T-cell (primary cell): ENCODE measurements at regions of chr4 and their contacts with region 1.

Region 1: DNA sequence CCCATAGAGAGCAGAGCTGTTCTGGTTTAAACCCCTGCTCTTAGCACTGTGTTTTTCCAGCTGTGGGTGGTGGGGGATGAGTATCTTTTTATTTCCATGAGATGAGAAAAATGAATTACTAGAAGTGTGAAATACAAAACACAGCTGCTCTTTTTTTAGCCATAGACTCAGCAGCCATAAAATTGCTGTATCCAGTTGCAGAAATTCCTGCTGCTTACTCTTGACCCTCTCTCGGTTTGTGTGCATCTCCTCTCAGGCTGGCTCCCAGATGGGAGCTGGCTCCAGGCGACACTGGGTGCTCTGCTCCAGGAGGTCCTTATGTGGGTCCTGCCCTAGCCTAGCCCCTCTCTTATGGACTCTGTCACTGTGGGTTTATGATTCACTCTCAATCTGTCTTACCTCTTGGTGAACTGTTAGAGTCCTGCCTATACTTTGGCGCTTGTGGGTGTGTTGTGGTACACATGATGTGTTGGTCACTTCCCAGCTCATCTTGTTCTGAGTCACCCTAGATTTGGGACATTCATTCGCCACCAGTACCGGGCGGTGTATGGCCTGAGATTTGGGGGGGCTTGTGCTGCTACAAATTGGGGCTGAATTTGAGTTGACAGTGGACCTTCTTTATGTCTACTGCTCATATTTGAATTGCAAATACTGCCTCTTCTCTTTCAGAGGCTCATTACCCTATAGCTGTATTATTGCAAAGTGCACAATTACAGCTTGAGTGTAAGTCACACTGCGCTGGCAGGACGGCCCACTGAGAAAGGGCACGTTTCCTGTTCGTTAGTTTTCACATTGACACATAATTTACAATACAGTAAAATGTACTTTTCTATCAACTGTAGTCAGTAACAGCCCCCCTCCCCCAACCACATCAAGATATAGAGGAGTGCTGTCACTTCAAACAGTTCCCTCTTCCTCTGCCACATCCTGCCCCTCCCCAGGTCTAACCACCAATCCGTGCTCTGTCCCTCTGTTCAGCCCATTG is 46.9 kb upstream of the MSANTD1 start:
- DNase-seq: peak; percentile 49 to 90 (median 79)
- ATAC-seq: peak; percentile 98
- H3K4me3 ChIP-seq: peak overlapping the region; percentile 11 to 21
- H3K4me3 Mint-ChIP-seq: peak overlapping the region; percentile 59 to 73 (median 65)
- H3K27ac ChIP-seq: peak overlapping the region; percentile 64
- H3K27ac Mint-ChIP-seq: peak overlapping the region; percentile 82 to 87
- H3K4me1 ChIP-seq: peaks cover 40 to 66% of the 10 kb centered on the region in 2 experiments
- H3K4me1 Mint-ChIP-seq: peaks cover 54 to 59% (median 58%) of the 10 kb centered on the region in 3 donors
- H3K27me3 ChIP-seq: no peaks in the 10 kb centered on the region
- H3K27me3 Mint-ChIP-seq: no peaks in the 10 kb centered on the region

Region 2: DNA sequence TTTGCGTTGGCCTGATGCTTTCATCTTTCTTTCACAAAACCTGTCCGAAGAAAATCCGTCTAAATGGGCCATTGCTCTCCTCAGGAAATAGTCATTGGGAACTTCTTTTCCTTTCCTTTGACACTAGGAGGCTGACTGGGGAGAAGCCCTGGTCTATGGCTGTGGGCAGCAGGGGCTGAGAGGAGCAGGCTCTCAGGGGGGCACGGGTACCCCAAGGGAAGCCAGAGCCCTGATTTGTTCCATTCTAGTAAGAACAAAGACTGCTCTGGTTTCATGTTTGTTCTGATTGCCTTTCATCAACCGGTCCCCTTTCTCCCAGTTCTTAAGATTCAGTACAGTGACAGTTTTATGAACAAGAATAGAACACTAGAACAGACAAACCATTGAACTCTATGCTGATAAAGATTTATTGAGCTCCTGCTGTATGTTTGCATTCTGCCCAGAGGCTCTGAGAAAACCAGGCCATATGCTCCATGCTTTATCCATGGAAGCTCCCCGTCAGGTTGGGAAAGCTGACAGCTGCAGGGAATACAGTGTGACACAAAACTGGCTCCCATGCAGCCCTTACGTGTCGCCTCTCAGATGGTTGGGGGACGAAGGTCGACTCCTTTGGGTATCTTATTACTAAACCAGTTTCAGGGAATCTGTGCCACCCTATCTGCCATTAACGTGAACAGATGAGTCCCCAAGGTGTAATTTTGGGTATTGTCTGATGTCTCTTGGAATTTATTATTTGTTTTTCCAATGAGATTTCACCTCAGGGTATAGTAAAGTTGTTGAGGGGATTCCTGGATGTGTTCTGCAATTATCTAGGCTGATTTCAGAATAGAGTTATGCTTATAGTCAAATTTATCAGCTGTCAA is 25.4 kb before region 1 on chr4:
- CTCF ChIA-PET with region 1: no interaction called
- POLR2A ChIA-PET with region 1: no interaction called
- DNase-seq: no peak
- ATAC-seq: no peak
- H3K4me3 ChIP-seq: no peak overlapping the region
- H3K4me3 Mint-ChIP-seq: no peak overlapping the region
- H3K27ac ChIP-seq: no peak overlapping the region
- H3K27ac Mint-ChIP-seq: no peak overlapping the region
- H3K4me1 ChIP-seq: no peaks in the 10 kb centered on the region
- H3K4me1 Mint-ChIP-seq: no peaks in the 10 kb centered on the region
- H3K27me3 ChIP-seq: no peaks in the 10 kb centered on the region
- H3K27me3 Mint-ChIP-seq: no peaks in the 10 kb centered on the region

Region 3: DNA sequence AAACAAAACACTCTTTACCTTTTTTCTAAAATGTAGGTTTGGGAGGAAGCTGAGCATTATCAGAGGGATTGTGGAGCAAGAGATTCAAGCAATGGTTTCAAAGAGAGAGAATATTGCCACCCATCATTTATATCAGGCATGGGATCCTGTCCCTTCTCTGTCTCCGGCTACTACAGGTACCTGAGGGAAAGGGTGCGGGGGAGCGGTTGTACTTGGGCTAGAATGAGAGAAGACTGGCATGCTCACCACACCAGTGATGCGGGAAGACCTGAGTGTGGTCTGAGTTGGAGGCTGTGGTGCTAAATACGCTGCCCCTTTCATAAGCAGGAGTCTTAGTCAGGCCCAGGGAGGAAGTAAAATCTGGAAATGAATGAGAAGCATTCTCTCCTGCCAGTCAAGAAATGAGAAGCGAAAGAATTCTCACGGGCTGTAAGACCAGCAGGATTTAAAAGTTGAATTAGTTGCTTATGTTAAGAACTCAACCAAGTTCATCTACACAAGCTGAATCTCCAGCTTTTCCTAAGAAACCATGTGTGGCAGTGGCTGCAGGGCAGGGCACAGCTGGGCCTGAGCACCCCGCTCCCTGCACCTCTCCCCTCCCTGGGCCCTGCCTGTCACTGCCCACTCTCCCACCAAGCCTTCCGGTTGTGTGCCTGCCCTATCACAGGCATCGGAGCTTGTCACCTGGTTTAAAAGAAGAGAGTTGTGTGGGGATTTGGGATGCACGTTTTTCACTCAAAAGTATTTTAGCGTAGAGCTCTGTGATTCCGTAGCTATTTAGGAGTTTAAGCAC is 22.1 kb after region 1 on chr4:
- CTCF ChIA-PET with region 1: interaction called, 3 to 11 read pairs
- POLR2A ChIA-PET with region 1: interaction called in 1 of 2 experiments, 3 read pairs
- DNase-seq: no peak
- ATAC-seq: no peak
- H3K4me3 ChIP-seq: no peak overlapping the region
- H3K4me3 Mint-ChIP-seq: no peak overlapping the region
- H3K27ac ChIP-seq: no peak overlapping the region
- H3K27ac Mint-ChIP-seq: no peak overlapping the region
- H3K4me1 ChIP-seq: peaks cover 0 to 12% of the 10 kb centered on the region in 2 experiments
- H3K4me1 Mint-ChIP-seq: no peaks in the 10 kb centered on the region
- H3K27me3 ChIP-seq: no peaks in the 10 kb centered on the region
- H3K27me3 Mint-ChIP-seq: no peaks in the 10 kb centered on the region

Region 4: DNA sequence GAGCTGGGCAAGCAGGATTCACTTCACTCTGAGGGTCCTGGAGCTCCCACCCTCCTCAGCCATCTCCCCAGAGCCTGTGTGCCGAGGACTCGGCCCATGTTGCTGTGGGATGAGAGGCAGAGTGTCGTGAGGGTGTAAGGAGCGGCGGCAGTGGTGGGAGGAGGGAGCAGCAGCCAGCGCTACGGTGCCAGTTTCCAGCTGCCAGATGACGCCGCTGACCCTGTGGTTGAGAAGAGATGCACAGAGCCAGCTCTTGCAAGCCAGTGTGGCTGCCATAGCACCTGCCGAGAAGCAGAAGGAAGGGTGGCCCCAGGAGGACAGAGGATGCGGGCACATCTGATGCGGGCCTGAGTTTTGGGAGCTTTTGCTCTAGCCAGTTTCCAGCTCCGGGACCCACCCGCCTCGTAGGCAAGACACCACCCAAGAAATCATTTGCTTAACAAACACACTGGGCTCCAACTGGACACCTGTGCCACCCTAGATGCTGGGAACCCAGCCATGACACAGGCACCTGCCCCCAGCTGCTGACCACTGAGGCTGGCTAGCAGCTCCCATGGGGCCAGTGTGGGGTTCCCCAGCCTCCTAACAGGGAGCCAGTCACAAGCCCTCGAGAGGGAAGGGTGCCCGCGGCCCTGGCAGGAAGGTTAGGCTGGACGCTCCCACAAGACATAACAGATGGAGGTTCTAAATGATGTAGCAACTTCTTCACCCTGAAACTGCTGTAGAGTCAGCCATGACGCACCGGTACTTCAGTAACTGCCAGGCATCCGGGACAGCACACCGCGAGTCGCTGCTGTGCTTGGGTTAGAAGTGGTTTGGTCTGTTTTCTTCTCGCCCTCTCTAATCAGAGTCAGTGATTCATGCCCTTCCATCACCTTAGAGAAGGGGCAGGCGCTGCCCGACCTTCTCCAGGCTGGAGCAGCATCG is 55.8 kb after region 1 on chr4:
- CTCF ChIA-PET with region 1: no interaction called
- POLR2A ChIA-PET with region 1: no interaction called
- DNase-seq: peak in 1 of 35 experiments; percentile 21
- ATAC-seq: no peak
- H3K4me3 ChIP-seq: no peak overlapping the region
- H3K4me3 Mint-ChIP-seq: no peak overlapping the region
- H3K27ac ChIP-seq: no peak overlapping the region
- H3K27ac Mint-ChIP-seq: no peak overlapping the region
- H3K4me1 ChIP-seq: no peaks in the 10 kb centered on the region
- H3K4me1 Mint-ChIP-seq: no peaks in the 10 kb centered on the region
- H3K27me3 ChIP-seq: peaks cover 0 to 6% of the 10 kb centered on the region in 2 experiments
- H3K27me3 Mint-ChIP-seq: no peaks in the 10 kb centered on the region

Region 5: GRCh38 chr4:3285558-3286334 is 83.7 kb after region 1 on chr4:
- CTCF ChIA-PET with region 1: no interaction called
- POLR2A ChIA-PET with region 1: no interaction called
- DNase-seq: peak in 2 of 35 experiments; percentile 23 to 50
- ATAC-seq: peak in 1 of 4 experiments; percentile 22
- H3K4me3 ChIP-seq: no peak overlapping the region
- H3K4me3 Mint-ChIP-seq: no peak overlapping the region
- H3K27ac ChIP-seq: no peak overlapping the region
- H3K27ac Mint-ChIP-seq: no peak overlapping the region
- H3K4me1 ChIP-seq: peaks cover 0 to 8% of the 10 kb centered on the region in 2 experiments
- H3K4me1 Mint-ChIP-seq: peaks cover 0 to 8% (median 6%) of the 10 kb centered on the region in 3 donors
- H3K27me3 ChIP-seq: peaks cover 0 to 60% of the 10 kb centered on the region in 2 experiments
- H3K27me3 Mint-ChIP-seq: peaks cover 18 to 29% of the 10 kb centered on the region in 2 donors

Region 6: DNA sequence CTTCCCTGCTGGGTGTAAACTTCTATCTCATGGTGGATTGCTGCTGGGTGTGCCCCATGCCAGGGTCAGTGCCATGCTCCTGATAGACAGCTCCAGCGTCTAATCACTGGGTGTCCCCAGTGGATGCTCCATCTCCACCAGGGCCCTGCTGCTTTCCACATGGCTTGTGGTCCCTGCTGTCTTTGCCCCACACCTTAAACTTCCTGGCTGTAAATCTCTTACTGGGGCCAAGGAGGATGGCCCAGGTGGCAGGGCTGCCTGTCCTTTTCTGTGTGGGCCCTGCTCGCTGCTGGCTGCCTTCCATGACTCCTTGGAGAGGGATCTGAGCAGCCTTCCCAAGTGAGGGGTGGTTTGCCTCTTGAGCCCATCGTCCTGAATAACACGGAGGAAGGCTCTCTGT is 142.6 kb after region 1 on chr4:
- CTCF ChIA-PET with region 1: interaction called in 1 of 2 experiments, 3 read pairs
- POLR2A ChIA-PET with region 1: interaction called, 4 to 13 read pairs
- DNase-seq: no peak
- ATAC-seq: no peak
- H3K4me3 ChIP-seq: no peak overlapping the region
- H3K4me3 Mint-ChIP-seq: no peak overlapping the region
- H3K27ac ChIP-seq: no peak overlapping the region
- H3K27ac Mint-ChIP-seq: no peak overlapping the region
- H3K4me1 ChIP-seq: peaks cover 0 to 17% of the 10 kb centered on the region in 2 experiments
- H3K4me1 Mint-ChIP-seq: peaks cover 22 to 38% (median 29%) of the 10 kb centered on the region in 3 donors
- H3K27me3 ChIP-seq: peaks cover 0 to 3% of the 10 kb centered on the region in 2 experiments
- H3K27me3 Mint-ChIP-seq: no peaks in the 10 kb centered on the region